Activated CD8-positive, alpha-beta memory T cell treated with anti-CD3 and anti-CD28 coated beads, Interleukin-2, amount 10 ng/mL, durations not matched to agents 7 days and 5 days (primary cell): ENCODE measurements at regions of chr2 and their contacts with region 1.

Region 1: DNA sequence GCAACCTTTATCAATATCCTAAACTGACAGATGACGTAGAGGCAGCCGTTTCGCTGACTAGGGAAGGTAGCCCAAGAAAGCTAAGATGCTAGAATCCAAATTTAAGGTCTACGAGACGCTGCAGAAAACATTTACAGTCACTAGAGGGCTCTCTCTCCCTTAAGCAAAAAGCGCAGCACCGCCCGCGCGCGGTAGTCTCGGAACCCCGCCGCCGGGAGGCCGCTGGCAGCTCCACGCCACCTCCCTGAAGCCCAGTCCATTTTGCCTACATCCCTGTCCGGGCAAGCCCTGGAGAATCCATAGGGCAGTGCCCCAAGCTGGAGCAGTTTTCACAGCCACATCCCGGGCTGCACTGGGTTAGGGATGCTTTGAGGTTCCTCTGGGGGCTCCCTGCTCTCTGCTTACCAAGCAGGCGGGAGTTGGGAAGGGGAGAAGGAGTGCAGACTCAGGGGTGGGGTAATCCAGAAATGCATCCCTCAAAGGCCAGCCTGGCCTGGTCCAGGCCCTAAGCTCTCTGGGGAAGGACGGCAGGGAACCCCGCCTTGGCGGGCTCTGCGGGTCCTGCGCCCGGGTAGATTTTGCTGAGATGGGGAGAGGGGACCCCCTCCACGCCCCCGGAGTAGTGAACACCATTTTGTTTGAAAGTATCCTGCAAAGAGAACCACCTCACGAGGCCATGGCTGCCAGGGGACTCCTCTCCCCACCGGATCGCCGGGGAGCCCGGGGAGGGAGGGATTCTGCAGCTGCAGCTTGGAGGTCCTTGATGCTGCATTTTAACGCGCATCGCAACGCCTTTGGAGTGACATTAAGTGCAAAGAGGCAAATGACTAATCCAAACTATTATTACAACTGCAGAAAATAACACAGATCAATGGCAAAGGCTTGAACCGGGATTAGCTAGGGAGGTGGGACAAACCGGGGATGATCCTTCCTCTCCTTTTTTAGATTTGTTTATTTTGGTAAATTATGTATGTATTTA is 1.3 kb upstream of the DPYSL5 start:
- DNase-seq: peak; percentile 68
- ATAC-seq: peak; percentile 80
- H3K4me3 Mint-ChIP-seq: no peak overlapping the region
- H3K27ac Mint-ChIP-seq: no peak overlapping the region
- H3K4me1 Mint-ChIP-seq: peaks cover 9% of the 10 kb centered on the region
- H3K27me3 Mint-ChIP-seq: peaks cover 66% of the 10 kb centered on the region

Region 2: DNA sequence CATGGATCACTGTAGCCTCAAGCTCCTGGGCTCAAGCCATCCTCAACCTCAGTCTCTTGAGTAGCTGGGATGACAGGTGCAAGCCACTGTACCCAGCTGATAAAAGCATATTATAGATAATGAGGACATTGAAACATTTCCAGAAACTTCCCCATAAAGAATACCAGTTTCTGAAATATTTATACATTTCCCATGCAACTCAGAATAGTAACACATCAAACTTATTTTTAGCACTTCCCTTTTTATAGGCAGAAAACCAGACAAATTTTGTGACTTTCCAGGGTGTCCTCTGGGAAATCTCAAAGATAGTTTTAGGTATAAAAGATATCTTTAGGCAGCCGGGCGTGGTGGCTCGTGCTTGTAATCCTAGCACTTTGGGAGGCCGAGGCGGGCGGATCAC is 23.7 kb before region 1 on chr2:
- CTCF ChIA-PET with region 1: no interaction called
- DNase-seq: no peak
- ATAC-seq: no peak
- H3K4me3 Mint-ChIP-seq: no peak overlapping the region
- H3K27ac Mint-ChIP-seq: no peak overlapping the region
- H3K4me1 Mint-ChIP-seq: no peaks in the 10 kb centered on the region
- H3K27me3 Mint-ChIP-seq: peaks cover 27% of the 10 kb centered on the region

Region 3: GRCh38 chr2:26922405-26923188 is 76.0 kb after region 1 on chr2:
- CTCF ChIA-PET with region 1: interaction called, 45 read pairs
- DNase-seq: peak; percentile 52
- ATAC-seq: peak; percentile 76
- H3K4me3 Mint-ChIP-seq: no peak overlapping the region
- H3K27ac Mint-ChIP-seq: no peak overlapping the region
- H3K4me1 Mint-ChIP-seq: peaks cover 2% of the 10 kb centered on the region
- H3K27me3 Mint-ChIP-seq: peaks cover 25% of the 10 kb centered on the region

Region 4: GRCh38 chr2:26942543-26943295 is 96.1 kb after region 1 on chr2:
- CTCF ChIA-PET with region 1: interaction called, 82 read pairs
- DNase-seq: peak; percentile 72
- ATAC-seq: peak; percentile 42
- H3K4me3 Mint-ChIP-seq: no peak overlapping the region
- H3K27ac Mint-ChIP-seq: no peak overlapping the region
- H3K4me1 Mint-ChIP-seq: peaks cover 2% of the 10 kb centered on the region
- H3K27me3 Mint-ChIP-seq: peaks cover 8% of the 10 kb centered on the region

Region 5: GRCh38 chr2:26959331-26959730 is 112.7 kb after region 1 on chr2:
- CTCF ChIA-PET with region 1: interaction called, 16 read pairs
- DNase-seq: no peak
- ATAC-seq: no peak
- H3K4me3 Mint-ChIP-seq: no peak overlapping the region
- H3K27ac Mint-ChIP-seq: no peak overlapping the region
- H3K4me1 Mint-ChIP-seq: no peaks in the 10 kb centered on the region
- H3K27me3 Mint-ChIP-seq: peaks cover 55% of the 10 kb centered on the region

Region 6: DNA sequence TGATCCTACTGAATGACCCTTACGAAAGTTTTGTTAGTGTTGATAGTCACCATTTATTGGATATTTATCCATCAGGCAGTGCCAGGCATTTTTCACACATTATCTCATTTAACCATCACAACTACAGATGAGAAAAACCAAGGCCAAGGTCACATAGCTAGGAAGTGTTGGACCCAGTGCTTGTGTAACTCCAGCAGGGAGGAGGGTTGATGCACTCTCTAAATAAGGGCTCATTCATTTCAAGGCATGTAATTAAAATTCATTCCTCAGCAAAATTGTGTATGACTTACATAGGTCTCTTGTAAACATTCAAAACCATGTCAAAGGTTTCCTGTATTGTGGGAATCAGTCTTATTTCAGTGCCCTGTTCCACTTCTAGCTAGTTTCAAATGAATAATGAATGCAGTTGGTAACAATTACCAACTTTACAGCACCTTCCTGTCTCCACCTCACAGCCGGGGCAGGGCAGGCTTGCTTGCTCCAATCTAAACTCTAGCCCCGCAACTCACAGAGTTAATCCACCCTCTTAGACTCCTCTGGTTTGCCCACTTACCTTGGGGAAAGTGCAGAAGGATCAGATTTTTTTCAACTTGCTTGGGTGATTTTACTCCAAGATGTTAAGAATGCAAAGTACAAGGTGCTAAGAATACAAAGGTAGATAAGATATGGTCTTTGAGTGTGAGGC is 118.0 kb after region 1 on chr2:
- CTCF ChIA-PET with region 1: interaction called, 16 read pairs
- DNase-seq: no peak
- ATAC-seq: no peak
- H3K4me3 Mint-ChIP-seq: no peak overlapping the region
- H3K27ac Mint-ChIP-seq: no peak overlapping the region
- H3K4me1 Mint-ChIP-seq: peaks cover 6% of the 10 kb centered on the region
- H3K27me3 Mint-ChIP-seq: peaks cover 39% of the 10 kb centered on the region

Region 7: DNA sequence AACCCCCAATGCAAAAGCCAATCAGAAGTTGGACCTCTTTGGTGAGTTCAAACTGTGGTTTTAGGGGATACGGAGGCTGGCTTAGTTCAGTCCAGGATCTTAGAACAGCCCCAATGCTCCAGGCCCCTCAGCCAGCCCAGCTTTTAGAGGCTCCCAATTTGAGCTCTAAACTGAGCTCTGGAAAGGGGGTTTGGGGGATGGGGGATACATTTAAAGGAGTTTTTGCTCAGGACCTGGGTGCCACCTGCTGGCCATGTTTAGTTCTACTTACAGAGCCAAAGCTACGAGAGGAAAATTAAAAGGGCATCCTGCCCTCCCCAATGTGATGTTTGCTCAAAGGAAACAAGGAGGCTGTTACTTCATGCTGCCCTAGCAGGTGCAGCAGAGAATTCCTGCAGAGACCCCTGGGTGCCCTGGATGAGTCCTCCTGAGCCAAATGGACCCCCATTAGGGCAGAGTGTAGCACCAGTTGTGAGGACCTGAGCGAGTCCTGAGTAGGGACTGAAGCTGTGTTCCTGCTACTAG is 170.2 kb after region 1 on chr2:
- CTCF ChIA-PET with region 1: interaction called, 22 read pairs
- DNase-seq: peak; percentile 64
- ATAC-seq: peak; percentile 39
- H3K4me3 Mint-ChIP-seq: no peak overlapping the region
- H3K27ac Mint-ChIP-seq: no peak overlapping the region
- H3K4me1 Mint-ChIP-seq: peaks cover 6% of the 10 kb centered on the region
- H3K27me3 Mint-ChIP-seq: peaks cover 2% of the 10 kb centered on the region